ENCODE measurements at regions of chr10 and their contacts with region 1.

Region 1: DNA sequence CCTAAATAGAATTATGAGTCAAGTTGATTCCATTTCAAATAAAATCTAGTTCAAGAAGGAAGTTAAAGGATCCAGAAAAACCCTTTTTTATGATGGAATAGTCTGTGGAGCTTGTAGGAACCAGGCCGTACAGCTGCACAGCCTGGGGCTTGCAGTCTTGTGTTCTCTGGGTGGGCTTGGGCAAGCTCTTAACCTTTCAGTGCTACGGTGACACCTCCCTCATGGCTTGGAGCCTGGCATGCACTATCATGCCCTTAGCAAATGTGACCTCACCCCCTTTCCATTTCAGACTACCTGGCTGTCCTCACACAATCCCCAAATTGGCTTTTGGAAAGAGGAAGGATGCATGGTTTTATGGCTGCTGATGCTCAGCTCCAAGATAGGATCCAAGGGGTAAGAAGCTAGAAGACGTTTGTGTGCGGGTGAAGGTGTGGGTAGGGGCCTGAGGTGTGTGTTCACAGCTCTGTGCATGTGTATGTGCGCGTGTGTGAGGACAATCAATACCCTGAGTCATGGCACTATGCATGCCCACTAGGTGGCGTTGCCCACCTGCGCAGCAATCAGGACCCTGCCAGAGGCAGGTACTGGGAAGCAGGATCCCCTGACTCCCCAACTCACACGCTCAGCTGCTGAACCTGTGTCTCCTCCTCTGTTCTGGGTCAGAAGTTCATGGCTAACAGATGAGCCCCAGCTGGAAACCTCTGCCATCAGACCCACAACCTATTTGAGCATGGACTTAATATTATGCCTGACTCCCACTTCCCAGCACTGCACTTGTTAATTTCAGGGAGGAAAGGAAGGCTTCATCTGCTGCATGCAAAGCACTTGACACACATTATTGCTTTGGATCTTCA is 113.4 kb downstream of the PTPN20 start:
- DNase-seq: peak; percentile 69 to 87
- ATAC-seq: peak; percentile 84 to 96
- H3K4me3 ChIP-seq: no peak overlapping the region
- H3K27ac ChIP-seq: 0 out of 6 replicates have a peak overlapping the region, but pooled peaks of 1 of the 2 experiments have one; percentile 40
- H3K4me1 ChIP-seq: no peaks in the 10 kb centered on the region
- CTCF ChIP-seq: peak; percentile 93
- EP300 ChIP-seq: no peak
- POLR2A ChIP-seq: no peak
- RAD21 ChIP-seq: peak; percentile 87 to 91

Region 2: DNA sequence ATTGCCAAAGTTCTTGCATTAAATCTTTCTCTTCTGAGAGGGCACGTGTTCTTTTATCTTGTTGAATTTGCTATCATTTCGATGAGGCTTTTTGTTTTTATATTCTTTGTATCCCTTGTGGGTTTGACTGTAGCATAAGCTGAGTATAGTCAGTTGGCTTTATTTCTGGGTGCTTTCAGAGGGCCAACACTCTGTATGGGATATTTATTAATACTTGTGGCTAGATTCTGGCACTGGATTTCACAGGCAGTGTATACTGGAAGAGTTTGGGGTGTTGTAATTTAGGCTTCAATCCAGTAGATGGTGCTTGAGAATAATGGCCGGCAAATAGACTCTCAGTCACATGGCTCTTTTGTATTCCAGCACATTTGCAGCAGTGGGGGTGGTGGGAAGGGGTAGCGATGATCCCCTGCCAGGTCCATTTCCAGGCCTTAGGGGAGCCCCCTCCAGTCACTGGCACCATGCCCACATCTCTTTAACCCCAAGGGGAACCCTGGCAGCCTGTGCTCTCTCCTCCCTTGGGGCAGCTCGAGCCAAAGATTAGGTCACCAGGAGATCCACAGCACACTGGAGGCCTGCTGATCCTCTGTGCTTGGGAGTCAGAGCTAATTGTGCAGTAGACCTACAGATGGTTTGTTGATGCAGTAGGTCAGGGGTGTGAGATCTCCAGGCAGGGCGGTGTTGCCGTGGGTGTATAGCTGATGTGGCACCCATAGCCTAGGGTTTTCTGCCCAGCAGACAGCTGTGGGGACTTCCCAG is 31.6 kb before region 1 on chr10:
- CTCF ChIA-PET with region 1: interaction called, 18 read pairs
- POLR2A ChIA-PET with region 1: no interaction called
- DNase-seq: peak; percentile 28 to 31
- ATAC-seq: peak; percentile 92
- H3K4me3 ChIP-seq: no peak overlapping the region
- H3K27ac ChIP-seq: 0 out of 6 replicates have a peak overlapping the region, but pooled peaks of 1 of the 2 experiments have one; percentile 13
- H3K4me1 ChIP-seq: no peaks in the 10 kb centered on the region
- CTCF ChIP-seq: peak; percentile 32; the same call in 2 of the 3 replicates
- EP300 ChIP-seq: no peak
- POLR2A ChIP-seq: no peak
- RAD21 ChIP-seq: peak in 1 of 2 experiments; percentile 46; a peak in 4 of 5 replicates

Region 3: DNA sequence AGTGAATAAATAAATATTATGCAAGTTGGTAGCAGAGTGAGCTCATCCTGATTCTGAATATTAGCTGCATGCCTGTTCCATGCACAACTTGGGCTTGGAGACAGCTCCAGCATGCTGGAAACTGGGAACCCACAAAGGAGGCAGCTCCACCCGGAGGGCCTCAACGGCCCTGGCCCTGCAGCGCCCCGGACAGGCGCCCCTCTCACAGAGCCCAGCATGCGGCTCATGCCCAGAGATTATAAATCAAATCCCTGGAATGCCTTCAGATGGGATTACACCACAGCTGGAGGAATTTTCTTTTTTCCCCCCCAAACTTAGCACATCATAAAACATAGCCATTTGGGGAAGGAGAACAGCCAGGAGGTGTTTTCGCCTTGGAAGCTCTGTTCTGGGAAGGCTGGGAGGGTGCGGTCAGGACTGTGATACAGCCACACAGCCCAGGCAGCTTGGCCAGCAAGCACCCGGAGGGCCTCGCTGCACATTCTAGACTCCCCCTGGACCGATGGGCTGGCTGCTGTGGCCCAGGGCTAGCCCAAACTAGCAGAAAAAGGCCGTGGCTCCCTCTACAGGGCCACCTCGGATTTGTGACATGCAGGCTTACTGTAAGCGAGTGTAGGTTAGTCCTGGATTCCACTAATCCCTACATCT is 11.0 kb before region 1 on chr10:
- CTCF ChIA-PET with region 1: interaction called, 72 read pairs
- POLR2A ChIA-PET with region 1: no interaction called
- DNase-seq: no peak
- ATAC-seq: peak in 1 of 2 experiments; percentile 37; a peak in 1 of 6 replicates
- H3K4me3 ChIP-seq: no peak overlapping the region
- H3K27ac ChIP-seq: no peak overlapping the region
- H3K4me1 ChIP-seq: no peaks in the 10 kb centered on the region
- CTCF ChIP-seq: no peak
- EP300 ChIP-seq: no peak
- POLR2A ChIP-seq: no peak
- RAD21 ChIP-seq: no peak

Region 4: DNA sequence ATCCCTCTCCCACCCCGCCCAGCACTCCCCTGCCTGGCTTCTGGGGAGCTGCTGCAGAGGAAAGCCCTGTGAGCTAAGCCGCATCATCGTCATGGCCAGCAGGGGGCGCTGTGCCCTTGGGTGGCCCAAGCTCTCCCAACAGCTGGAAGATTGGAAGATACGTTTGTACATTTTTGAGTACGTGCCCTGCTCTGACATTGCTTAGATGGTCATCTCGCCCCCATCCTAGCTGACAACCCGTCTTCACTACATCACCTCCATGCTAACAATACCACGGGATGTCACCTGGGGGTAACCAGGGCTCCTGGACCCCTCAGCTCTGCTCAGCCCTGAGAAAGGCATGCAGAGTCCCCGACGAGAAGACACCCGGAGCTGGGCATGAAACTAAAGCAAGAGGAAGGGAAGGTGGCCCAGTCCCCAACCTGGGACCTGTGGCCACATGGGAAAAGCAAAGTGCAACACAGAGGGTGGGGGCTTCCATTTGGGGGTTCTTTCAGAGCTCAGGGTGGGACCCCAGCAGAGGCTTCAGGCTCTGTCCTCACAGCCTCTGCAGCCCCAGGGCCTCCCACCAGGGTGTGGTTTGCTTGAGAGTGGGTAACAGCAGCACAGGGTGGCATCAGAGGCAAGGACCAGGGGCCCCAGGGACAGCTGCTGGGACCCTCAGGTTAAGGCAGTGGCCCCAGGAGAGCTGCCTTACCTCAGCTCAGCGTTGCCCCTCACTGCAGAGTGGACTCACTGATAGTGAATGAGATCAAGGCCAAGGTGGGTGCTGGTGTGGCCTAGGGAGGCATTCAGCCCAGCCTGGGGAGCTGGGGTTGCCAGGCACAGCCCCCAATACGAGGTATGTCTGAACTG is 23.3 kb after region 1 on chr10:
- CTCF ChIA-PET with region 1: interaction called, 59 read pairs
- POLR2A ChIA-PET with region 1: no interaction called
- DNase-seq: peak; percentile 71 to 75
- ATAC-seq: peak; percentile 79 to 95
- H3K4me3 ChIP-seq: no peak overlapping the region
- H3K27ac ChIP-seq: no peak overlapping the region
- H3K4me1 ChIP-seq: no peaks in the 10 kb centered on the region
- CTCF ChIP-seq: peak; percentile 84
- EP300 ChIP-seq: no peak
- POLR2A ChIP-seq: no peak
- RAD21 ChIP-seq: peak; percentile 77 to 89

Region 5: DNA sequence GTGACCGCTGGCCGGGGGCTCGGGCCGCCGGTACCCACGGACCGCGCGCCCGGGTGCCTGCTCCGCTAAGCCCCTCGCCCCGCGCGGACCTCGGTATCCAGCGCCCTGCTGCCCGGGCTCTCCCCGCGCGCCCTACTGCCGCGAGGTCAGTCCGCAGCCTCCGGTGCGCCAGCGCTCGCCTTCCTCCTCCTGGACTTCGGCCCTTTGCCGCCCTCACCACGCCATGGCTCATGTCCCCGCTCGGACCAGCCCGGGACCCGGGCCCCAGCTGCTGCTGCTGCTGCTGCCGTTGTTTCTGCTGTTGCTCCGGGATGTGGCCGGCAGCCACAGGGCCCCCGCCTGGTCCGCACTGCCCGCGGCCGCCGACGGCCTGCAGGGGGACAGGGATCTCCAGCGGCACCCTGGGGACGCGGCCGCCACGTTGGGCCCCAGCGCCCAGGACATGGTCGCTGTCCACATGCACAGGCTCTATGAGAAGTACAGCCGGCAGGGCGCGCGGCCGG is 275.9 kb after region 1 on chr10:
- CTCF ChIA-PET with region 1: interaction called, 20 read pairs
- POLR2A ChIA-PET with region 1: no interaction called
- DNase-seq: no peak
- ATAC-seq: peak; percentile 27 to 70; a peak in 4 of 6 replicates
- H3K4me3 ChIP-seq: peak overlapping the region; percentile 49
- H3K27ac ChIP-seq: peak overlapping the region in 1 of 2 experiments; percentile 53; a peak in 2 of 6 replicates
- H3K4me1 ChIP-seq: no peaks in the 10 kb centered on the region
- CTCF ChIP-seq: no peak
- EP300 ChIP-seq: no peak
- POLR2A ChIP-seq: no peak
- RAD21 ChIP-seq: no peak

Region 6: DNA sequence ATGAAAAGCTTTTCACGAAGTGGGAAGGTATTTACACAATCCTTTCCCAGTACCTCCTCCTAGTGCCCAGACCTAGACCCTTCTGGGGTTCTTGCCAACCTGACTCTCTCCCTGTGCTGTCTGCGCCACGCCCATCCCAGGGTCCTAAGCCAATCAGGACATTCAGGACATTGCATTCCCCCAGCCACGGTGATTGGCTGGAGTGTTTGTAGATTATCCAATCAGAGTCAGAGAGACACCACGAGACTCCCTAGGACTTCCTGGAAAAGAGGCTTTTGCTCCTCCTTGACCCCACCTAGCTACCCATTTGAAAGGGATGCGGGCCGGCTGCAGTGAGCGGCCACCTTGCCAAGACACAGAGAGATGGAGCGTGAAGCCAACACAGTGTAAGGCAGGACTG is 294.1 kb after region 1 on chr10:
- CTCF ChIA-PET with region 1: interaction called, 131 read pairs
- POLR2A ChIA-PET with region 1: no interaction called
- DNase-seq: peak; percentile 29 to 43
- ATAC-seq: peak in 1 of 2 experiments; percentile 68; a peak in 3 of 6 replicates
- H3K4me3 ChIP-seq: no peak overlapping the region
- H3K27ac ChIP-seq: no peak overlapping the region
- H3K4me1 ChIP-seq: no peaks in the 10 kb centered on the region
- CTCF ChIP-seq: no peak
- EP300 ChIP-seq: no peak
- POLR2A ChIP-seq: no peak
- RAD21 ChIP-seq: no peak

Region 7: GRCh38 chr10:47340608-47341170 is 316.1 kb after region 1 on chr10:
- CTCF ChIA-PET with region 1: interaction called, 13 read pairs
- POLR2A ChIA-PET with region 1: no interaction called
- DNase-seq: peak; percentile 67 to 87
- ATAC-seq: peak; percentile 77 to 88
- H3K4me3 ChIP-seq: no peak overlapping the region
- H3K27ac ChIP-seq: no peak overlapping the region
- H3K4me1 ChIP-seq: no peaks in the 10 kb centered on the region
- CTCF ChIP-seq: peak; percentile 87
- EP300 ChIP-seq: no peak
- POLR2A ChIP-seq: no peak
- RAD21 ChIP-seq: peak; percentile 66 to 79

Measured in A549 (cell line).